MCF 10A (cell line): ENCODE measurements at regions of chr4 and their contacts with region 1.

Region 1: DNA sequence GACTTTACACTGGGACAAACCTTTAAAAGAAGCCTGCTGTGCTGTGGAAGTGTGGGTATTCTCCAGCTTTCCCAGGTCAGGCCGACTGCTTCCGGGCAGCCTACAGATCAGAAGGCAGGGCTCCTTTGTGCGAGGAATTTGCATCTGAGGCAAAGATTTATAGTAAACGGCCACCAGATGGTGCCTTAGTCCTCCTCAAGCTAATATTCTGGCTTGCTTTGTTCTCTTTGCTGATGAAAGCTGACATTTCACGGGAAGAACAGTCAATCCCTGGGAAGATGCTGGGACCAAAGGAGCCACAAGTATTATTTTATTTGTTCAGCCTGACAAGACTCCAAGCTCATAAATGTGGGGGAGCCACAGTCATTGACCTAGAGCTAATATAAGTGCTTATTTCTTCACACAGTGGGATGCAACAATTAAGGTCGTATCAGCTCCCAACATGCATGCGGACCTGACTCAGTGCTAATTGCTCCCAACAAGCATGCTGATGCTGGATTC is 120.7 kb upstream of the TRIM2 start:
- DNase-seq: peak; percentile 83
- H3K4me3 Mint-ChIP-seq: no peak overlapping the region
- H3K27ac Mint-ChIP-seq: peak overlapping the region; percentile 67
- H3K4me1 Mint-ChIP-seq: peaks cover 15% of the 10 kb centered on the region
- H3K27me3 Mint-ChIP-seq: no peaks in the 10 kb centered on the region
- CTCF ChIP-seq: peak; percentile 57

Region 2: GRCh38 chr4:152779513-152780266 is 303.8 kb before region 1 on chr4 and contains the starts of genes ARFIP1 and TIGD4:
- CTCF ChIA-PET with region 1: interaction called, 10 read pairs
- POLR2A ChIA-PET with region 1: interaction called, 3 read pairs
- intact Hi-C with region 1: no loop called
- DNase-seq: peak; percentile 97
- H3K4me3 Mint-ChIP-seq: peak within 1 kb of the TSS; percentile 87
- H3K27ac Mint-ChIP-seq: peak within 1 kb of the TSS; percentile 91
- H3K4me1 Mint-ChIP-seq: peaks cover 24% of the 10 kb centered on the region
- H3K27me3 Mint-ChIP-seq: peaks cover 13% of the 10 kb centered on the region
- CTCF ChIP-seq: no peak
- total RNA-seq, gene ARFIP1: 26.7 and 35.5 TPM in 2 replicates
- total RNA-seq, gene TIGD4: 0.12 and 0.32 TPM in 2 replicates

Region 3: DNA sequence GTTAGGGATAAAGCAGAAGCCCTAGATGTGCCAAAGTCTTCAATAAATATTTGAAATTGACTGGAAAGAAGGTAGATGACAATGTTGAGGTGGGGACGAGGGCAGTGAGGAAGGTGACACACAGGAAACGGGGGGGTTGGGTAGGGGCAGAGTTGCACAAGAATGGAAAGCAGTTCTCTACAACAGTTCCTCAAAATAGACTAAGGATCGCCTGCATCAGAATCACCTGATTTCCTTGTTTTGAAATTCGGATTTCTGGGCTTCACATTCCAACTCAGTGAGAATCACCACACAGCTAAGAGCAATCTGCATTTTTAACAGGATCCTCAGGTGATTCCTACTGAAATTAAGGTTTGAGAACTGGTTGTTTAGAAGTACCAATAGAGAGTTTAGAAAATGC is 233.1 kb before region 1 on chr4:
- CTCF ChIA-PET with region 1: interaction called, 70 read pairs
- POLR2A ChIA-PET with region 1: interaction called, 6 read pairs
- intact Hi-C with region 1: loop called (anchors 1 kb)
- DNase-seq: peak; percentile 61
- H3K4me3 Mint-ChIP-seq: peak overlapping the region; percentile 67
- H3K27ac Mint-ChIP-seq: peak overlapping the region; percentile 74
- H3K4me1 Mint-ChIP-seq: peaks cover 22% of the 10 kb centered on the region
- H3K27me3 Mint-ChIP-seq: no peaks in the 10 kb centered on the region
- CTCF ChIP-seq: no peak

Region 4: GRCh38 chr4:153060196-153060595 is 23.3 kb before region 1 on chr4:
- CTCF ChIA-PET with region 1: interaction called, 11 read pairs
- POLR2A ChIA-PET with region 1: no interaction called
- intact Hi-C with region 1: no loop called
- DNase-seq: no peak
- H3K4me3 Mint-ChIP-seq: no peak overlapping the region
- H3K27ac Mint-ChIP-seq: no peak overlapping the region
- H3K4me1 Mint-ChIP-seq: no peaks in the 10 kb centered on the region
- H3K27me3 Mint-ChIP-seq: peaks cover 35% of the 10 kb centered on the region
- CTCF ChIP-seq: no peak

Region 5: DNA sequence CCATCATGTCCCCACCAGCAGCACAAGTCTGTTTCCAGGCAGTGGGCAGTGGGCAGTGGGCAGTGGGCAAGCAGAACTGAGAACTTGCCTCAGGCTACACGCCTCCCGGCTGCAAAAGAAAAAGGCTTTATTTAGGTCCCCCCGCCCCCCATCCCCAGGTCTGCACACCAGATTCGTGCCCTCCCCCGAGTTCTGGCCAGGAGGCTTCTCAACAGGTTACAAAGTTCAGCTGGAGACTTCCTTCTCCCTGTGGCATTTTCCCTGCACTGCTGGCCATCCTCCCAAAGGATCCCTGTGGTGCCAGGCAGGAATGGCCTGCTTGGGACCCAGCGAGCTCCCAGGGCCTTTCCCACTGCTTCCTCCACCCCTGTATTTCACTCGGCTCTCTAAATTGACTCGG is 23.7 kb after region 1 on chr4:
- CTCF ChIA-PET with region 1: interaction called, 40 read pairs
- POLR2A ChIA-PET with region 1: no interaction called
- intact Hi-C with region 1: no loop called
- DNase-seq: no peak
- H3K4me3 Mint-ChIP-seq: no peak overlapping the region
- H3K27ac Mint-ChIP-seq: no peak overlapping the region
- H3K4me1 Mint-ChIP-seq: no peaks in the 10 kb centered on the region
- H3K27me3 Mint-ChIP-seq: peaks cover 33% of the 10 kb centered on the region
- CTCF ChIP-seq: no peak

Region 6: DNA sequence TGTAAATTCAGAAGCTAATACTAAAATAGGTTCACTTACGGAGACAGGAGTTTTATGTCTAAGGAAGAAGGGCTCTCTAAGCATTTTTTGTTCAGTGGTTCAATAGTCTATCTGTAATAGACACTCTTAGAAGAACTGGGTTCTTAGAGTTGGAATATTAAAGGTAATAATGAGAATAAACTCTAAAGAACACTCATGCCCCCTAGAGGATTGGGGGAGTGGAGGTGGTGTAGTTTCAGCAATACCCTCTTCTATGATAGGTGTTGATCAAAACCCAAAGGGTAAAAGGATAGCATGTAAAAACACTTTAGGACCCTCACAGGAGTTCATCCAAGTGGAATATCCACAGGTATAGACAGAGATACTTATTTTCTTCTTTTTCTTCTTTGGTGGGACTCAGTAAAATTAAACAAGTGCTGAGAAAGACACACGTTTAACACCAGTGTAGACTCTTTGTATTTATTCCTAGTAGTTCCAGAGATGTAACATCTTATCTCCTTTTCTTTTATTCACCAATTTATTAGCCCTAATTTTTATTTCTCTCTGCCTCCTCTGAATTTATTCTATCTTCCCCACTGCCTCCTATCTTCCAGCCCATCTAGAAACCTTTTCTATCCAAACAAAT is 235.3 kb after region 1 on chr4:
- CTCF ChIA-PET with region 1: no interaction called
- POLR2A ChIA-PET with region 1: no interaction called
- intact Hi-C with region 1: loop called (anchors 1 kb)
- DNase-seq: peak; percentile 68
- H3K4me3 Mint-ChIP-seq: no peak overlapping the region
- H3K27ac Mint-ChIP-seq: no peak overlapping the region
- H3K4me1 Mint-ChIP-seq: no peaks in the 10 kb centered on the region
- H3K27me3 Mint-ChIP-seq: no peaks in the 10 kb centered on the region
- CTCF ChIP-seq: peak; percentile 57